Mammary epithelial cell (primary cell): ENCODE measurements at regions of chr22 and their contacts with region 1.

Region 1: GRCh38 chr22:27331526-27332281 is 469.9 kb downstream of the MN1 start:
- DNase-seq: no peak
- H3K4me3 ChIP-seq: no peak overlapping the region
- H3K27ac ChIP-seq: no peak overlapping the region
- H3K4me1 ChIP-seq: peaks cover 6% of the 10 kb centered on the region
- H3K27me3 ChIP-seq: no peaks in the 10 kb centered on the region
- CTCF ChIP-seq: peak; percentile 41 to 43

Region 2: GRCh38 chr22:26974914-26975803 is 356.5 kb before region 1 on chr22:
- CTCF ChIA-PET with region 1: no interaction called
- dilution Hi-C with region 1: no loop called
- in situ Hi-C with region 1: no loop called
- intact Hi-C with region 1: no loop called
- DNase-seq: no peak
- H3K4me3 ChIP-seq: no peak overlapping the region
- H3K27ac ChIP-seq: no peak overlapping the region
- H3K4me1 ChIP-seq: no peaks in the 10 kb centered on the region
- H3K27me3 ChIP-seq: no peaks in the 10 kb centered on the region
- CTCF ChIP-seq: no peak

Region 3: GRCh38 chr22:27372969-27373670 is 41.4 kb after region 1 on chr22:
- CTCF ChIA-PET with region 1: no interaction called
- dilution Hi-C with region 1: loop called (anchors 5 kb)
- in situ Hi-C with region 1: no loop called
- intact Hi-C with region 1: no loop called
- DNase-seq: no peak
- H3K4me3 ChIP-seq: no peak overlapping the region
- H3K27ac ChIP-seq: no peak overlapping the region
- H3K4me1 ChIP-seq: no peaks in the 10 kb centered on the region
- H3K27me3 ChIP-seq: no peaks in the 10 kb centered on the region
- CTCF ChIP-seq: no peak

Region 4: GRCh38 chr22:27438271-27438980 is 106.7 kb after region 1 on chr22:
- CTCF ChIA-PET with region 1: no interaction called
- dilution Hi-C with region 1: no loop called
- in situ Hi-C with region 1: no loop called
- intact Hi-C with region 1: no loop called
- DNase-seq: no peak
- H3K4me3 ChIP-seq: no peak overlapping the region
- H3K27ac ChIP-seq: no peak overlapping the region
- H3K4me1 ChIP-seq: peaks cover 4% of the 10 kb centered on the region
- H3K27me3 ChIP-seq: no peaks in the 10 kb centered on the region
- CTCF ChIP-seq: no peak

Region 5: GRCh38 chr22:27692243-27692642 is 360.5 kb after region 1 on chr22:
- CTCF ChIA-PET with region 1: no interaction called
- dilution Hi-C with region 1: loop called (anchors 10 kb)
- in situ Hi-C with region 1: no loop called
- intact Hi-C with region 1: no loop called
- DNase-seq: no peak
- H3K4me3 ChIP-seq: no peak overlapping the region
- H3K27ac ChIP-seq: no peak overlapping the region
- H3K4me1 ChIP-seq: no peaks in the 10 kb centered on the region
- H3K27me3 ChIP-seq: no peaks in the 10 kb centered on the region
- CTCF ChIP-seq: no peak